Posterior cingulate gyrus (tissue), 11 donors: ENCODE measurements at regions of chr16 and their contacts with region 1.

Region 1: GRCh38 chr16:47037746-47038458 is 64.4 kb upstream of the DNAJA2 start:
- DNase-seq: peak; percentile 73 to 97 (median 91)

Region 2: DNA sequence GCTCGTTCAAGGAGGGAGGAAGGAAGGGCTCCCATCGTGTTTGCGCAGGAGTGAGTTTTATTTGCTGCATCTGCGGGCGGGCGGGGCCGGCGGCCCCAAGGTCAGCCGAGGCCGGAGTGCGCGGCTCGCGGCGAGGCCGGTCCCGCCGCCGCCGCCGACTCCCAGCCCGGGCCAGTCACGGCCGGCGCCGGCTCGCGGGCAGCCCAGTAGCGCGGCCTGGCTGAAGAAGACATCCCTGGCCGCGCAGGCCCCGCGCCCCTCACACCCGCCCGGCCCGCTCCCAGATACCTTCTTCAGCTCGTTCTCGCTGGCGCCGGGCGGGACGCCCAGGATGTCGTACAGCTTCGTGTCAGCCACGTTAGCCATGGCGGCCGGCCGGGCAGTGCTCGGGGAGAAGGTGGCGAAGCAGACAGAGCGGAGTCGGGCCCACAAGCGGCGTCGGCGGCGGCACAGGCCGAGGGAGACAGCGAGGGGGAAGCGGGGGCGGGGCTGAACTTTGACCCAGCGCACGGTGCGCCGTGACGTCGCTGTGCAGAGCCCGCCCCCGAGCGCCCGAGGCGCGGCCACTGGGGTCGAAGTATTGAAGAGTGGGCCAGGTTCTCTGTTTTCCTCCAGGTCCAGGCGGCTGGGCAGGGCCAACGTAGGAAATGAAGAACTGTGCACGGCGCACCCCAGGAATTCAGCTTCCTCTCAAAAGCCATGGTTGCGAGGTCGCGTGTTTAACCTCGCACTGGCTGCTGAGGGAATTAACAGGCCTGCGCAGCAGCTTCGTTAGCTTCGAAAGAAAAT is 64.5 kb before region 1 on chr16 and contains the start of gene DNAJA2:
- intact Hi-C with region 1: no loop called
- DNase-seq: peak; percentile 90 to 99 (median 93)

Region 3: GRCh38 chr16:48054881-48055601 is 1017.1 kb after region 1 on chr16:
- intact Hi-C with region 1: loop called (anchors 10 kb)
- DNase-seq: peak; percentile 45 to 94 (median 72)

Region 4: GRCh38 chr16:48164907-48165726 is 1127.2 kb after region 1 on chr16:
- intact Hi-C with region 1: loop called (anchors 2 kb)
- DNase-seq: peak; percentile 65 to 96 (median 86)